CD8-positive, alpha-beta T cell (primary cell): ENCODE measurements at regions of chr6 and their contacts with region 1.

Region 1: GRCh38 chr6:14066782-14067406 is 50.7 kb upstream of the CD83 start:
- DNase-seq: peak in 3 of 9 experiments; percentile 8 to 74 (median 64)
- ATAC-seq: peak; percentile 78
- H3K4me3 ChIP-seq: no peak overlapping the region
- H3K4me3 Mint-ChIP-seq: no peak overlapping the region
- H3K27ac ChIP-seq: no peak overlapping the region
- H3K27ac Mint-ChIP-seq: no peak overlapping the region
- H3K4me1 ChIP-seq: no peaks in the 10 kb centered on the region
- H3K4me1 Mint-ChIP-seq: no peaks in the 10 kb centered on the region
- H3K27me3 ChIP-seq: peaks cover 0 to 3% of the 10 kb centered on the region in 2 experiments
- H3K27me3 Mint-ChIP-seq: peaks cover 10% of the 10 kb centered on the region
- CTCF ChIP-seq: peak; percentile 60

Region 2: GRCh38 chr6:13439644-13440043 is 627.2 kb before region 1 on chr6:
- CTCF ChIA-PET with region 1: no interaction called
- POLR2A ChIA-PET with region 1: no interaction called
- intact Hi-C with region 1: loop called in 1 of 2 experiments (anchors 5 kb)
- DNase-seq: no peak
- ATAC-seq: no peak
- H3K4me3 ChIP-seq: no peak overlapping the region
- H3K4me3 Mint-ChIP-seq: no peak overlapping the region
- H3K27ac ChIP-seq: no peak overlapping the region
- H3K27ac Mint-ChIP-seq: no peak overlapping the region
- H3K4me1 ChIP-seq: peaks cover 13% of the 10 kb centered on the region
- H3K4me1 Mint-ChIP-seq: peaks cover 23% of the 10 kb centered on the region
- H3K27me3 ChIP-seq: no peaks in the 10 kb centered on the region
- H3K27me3 Mint-ChIP-seq: no peaks in the 10 kb centered on the region
- CTCF ChIP-seq: no peak

Region 3: DNA sequence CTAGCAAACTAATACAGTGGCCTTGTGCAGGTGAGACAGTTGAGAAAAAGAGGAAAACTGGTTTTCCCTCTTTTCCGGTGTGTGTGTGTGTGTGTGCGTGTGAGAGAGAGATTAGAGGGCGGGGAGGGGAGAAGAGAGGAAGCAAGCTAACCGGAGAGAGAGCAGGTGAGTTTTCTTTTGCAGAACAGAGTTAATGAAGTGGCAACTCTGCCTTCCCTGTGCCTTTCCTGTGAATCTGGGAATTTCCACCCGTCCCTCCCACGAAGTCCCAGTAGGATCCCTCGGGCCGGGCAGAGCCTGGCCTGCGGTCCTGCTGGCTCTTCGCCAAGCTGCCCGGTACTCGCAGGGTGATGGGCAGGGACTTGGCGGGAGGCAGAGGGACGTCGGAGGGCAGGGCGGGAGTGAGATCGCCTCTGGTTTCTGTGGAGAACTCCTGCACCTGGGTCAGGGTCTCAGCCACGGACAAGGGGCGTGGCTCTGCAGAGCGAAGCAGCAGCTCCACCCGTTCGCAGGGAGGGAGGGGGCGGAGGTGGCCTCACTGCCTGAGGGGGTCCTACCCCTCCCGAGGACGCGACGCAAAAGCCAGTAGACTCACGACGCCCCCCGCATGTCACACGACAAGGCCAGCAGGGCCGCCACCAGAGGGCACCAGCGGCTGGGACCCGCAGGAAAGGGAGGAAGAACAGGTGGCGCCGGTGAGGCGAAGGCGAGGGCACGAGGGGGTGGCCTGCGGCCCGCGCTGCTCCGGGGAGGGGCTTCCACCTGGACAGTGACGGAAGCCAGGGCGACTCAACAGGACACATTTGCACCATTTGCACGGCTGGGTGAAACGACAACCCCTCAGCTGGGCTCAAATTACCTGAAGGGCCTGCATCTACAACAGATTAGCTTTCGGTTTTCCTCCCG is 193.4 kb before region 1 on chr6:
- CTCF ChIA-PET with region 1: interaction called, 16 read pairs
- POLR2A ChIA-PET with region 1: no interaction called
- intact Hi-C with region 1: loop called in 1 of 2 experiments (anchors 1 kb)
- DNase-seq: peak; percentile 47 to 84 (median 77)
- ATAC-seq: peak; percentile 93
- H3K4me3 ChIP-seq: peak overlapping the region; percentile 40 to 44
- H3K4me3 Mint-ChIP-seq: peak overlapping the region; percentile 83
- H3K27ac ChIP-seq: no peak overlapping the region
- H3K27ac Mint-ChIP-seq: no peak overlapping the region
- H3K4me1 ChIP-seq: peaks cover 7% of the 10 kb centered on the region
- H3K4me1 Mint-ChIP-seq: peaks cover 15% of the 10 kb centered on the region
- H3K27me3 ChIP-seq: no peaks in the 10 kb centered on the region
- H3K27me3 Mint-ChIP-seq: peaks cover under 1% of the 10 kb centered on the region
- CTCF ChIP-seq: peak; percentile 67

Region 4: GRCh38 chr6:14046476-14047068 is 20.3 kb before region 1 on chr6:
- CTCF ChIA-PET with region 1: interaction called, 36 read pairs
- POLR2A ChIA-PET with region 1: no interaction called
- intact Hi-C with region 1: no loop called
- DNase-seq: peak in 7 of 9 experiments; percentile 9 to 68 (median 33)
- ATAC-seq: peak; percentile 83
- H3K4me3 ChIP-seq: no peak overlapping the region
- H3K4me3 Mint-ChIP-seq: no peak overlapping the region
- H3K27ac ChIP-seq: no peak overlapping the region
- H3K27ac Mint-ChIP-seq: no peak overlapping the region
- H3K4me1 ChIP-seq: no peaks in the 10 kb centered on the region
- H3K4me1 Mint-ChIP-seq: peaks cover 1% of the 10 kb centered on the region
- H3K27me3 ChIP-seq: no peaks in the 10 kb centered on the region
- H3K27me3 Mint-ChIP-seq: peaks cover 31% of the 10 kb centered on the region
- CTCF ChIP-seq: peak; percentile 60